AG04449 (cell line): ENCODE measurements at regions of chr19 and their contacts with region 1.

Region 1: GRCh38 chr19:47273313-47273977 is 1.2 kb upstream of the INAFM1 start:
- DNase-seq: peak; percentile 46
- H3K4me3 ChIP-seq: peak overlapping the region; percentile 66
- CTCF ChIP-seq: no peak

Region 2: DNA sequence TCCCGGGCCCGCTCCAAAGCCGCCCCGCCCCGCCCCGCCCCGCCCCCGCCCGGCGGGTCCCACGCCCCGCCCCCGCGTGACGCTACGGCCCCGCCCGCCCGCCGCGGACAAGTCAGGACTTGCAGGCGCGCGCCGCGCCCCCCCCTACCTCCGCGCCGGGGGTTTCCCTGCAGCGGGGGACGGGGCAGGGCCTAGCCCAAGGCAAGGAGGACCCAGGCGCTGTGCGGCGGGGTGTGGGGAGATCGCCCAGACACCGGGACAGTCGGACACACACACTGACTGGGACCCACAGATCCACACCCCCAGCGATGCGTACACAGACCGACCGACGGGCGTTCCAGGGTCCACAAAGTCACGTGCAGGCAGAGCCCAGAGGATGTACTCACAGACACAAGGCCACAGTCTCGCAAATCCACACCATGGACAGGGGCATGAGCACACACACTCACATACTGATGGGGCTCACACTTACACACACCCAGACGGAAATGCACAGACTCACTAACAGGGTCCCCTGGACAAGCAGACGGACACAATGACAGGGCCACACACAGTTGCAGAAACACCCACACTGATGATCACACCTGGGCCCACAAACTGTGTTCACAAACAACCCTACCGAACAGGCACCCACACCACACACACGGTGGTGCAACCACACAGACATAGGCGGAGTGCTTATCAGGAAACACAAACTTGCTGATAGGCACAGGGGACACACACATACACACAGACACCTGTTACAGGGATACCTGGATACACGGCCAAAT is 42.0 kb before region 1 on chr19:
- CTCF ChIA-PET with region 1: no interaction called
- POLR2A ChIA-PET with region 1: no interaction called
- DNase-seq: no peak
- H3K4me3 ChIP-seq: peak overlapping the region; percentile 95
- CTCF ChIP-seq: no peak

Region 3: DNA sequence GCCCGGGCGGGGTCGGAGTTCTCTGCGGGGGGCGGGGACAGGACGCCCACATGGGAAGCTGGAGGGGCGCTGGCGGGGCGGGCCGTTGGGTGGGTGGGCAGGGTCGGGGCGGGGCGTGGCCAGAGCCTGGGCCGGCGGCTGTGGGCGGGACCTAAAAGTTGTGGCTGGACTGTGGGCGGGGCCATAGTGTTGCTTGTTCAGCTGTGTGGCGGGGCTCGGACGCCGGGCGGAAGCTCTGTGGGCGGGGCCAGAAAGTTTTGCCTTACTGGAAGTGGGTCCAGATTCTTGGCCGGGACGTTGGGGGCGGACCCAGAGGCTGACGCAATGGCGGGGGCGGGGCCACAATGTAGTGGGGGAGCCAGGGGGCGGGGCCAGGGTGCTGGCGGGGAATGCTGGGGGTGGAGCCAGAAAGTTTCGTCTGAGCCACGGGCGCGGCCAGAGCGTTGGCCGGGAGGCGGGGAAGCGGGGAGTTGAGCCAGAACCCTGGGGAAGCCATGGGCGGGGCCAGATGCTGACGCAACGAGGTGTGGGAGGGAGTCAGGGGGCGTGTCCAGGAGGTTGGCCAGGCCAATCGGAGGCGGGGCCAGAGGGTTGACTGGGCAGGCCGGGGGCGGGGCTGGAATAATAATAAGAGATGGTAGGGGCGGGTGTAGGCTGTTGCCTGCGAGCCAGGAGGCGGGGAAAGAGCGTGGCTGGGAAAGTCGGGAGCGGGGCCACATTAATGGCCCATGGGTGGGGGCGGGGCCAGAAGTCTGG is 16.6 kb before region 1 on chr19:
- CTCF ChIA-PET with region 1: interaction called, 6 read pairs
- POLR2A ChIA-PET with region 1: interaction called, 27 read pairs
- DNase-seq: peak; percentile 92
- H3K4me3 ChIP-seq: peak overlapping the region; percentile 71
- CTCF ChIP-seq: no peak

Region 4: DNA sequence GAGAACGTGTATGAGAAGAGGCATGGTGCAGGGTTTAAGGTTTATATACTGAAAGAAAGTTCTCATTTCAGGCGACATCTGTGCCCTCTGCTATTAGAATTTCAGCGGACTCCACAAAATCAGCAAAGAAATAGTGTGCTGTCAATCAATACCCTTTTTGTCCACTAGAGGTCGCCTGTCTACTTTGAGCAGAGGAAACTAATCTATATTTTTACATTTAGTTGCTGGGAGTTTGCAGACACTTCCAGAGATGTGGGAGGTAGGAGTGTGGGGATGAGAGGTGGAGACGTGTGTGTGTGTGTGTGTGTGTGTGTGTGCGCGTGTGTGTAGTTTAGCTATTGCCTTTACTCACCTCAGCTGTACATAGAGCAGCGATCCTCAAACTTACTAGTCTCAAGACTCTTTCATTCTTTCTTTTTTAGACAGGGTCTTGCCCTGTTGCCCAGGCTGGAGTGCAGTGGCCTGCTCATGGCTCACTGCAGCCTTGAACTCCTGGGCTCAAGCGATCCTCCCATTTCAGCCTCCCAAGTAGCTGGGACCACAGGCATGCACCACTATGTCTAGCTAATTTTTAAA is 11.0 kb after region 1 on chr19:
- CTCF ChIA-PET with region 1: interaction called, 88 read pairs
- POLR2A ChIA-PET with region 1: interaction called, 4 read pairs
- DNase-seq: no peak
- H3K4me3 ChIP-seq: no peak overlapping the region
- CTCF ChIP-seq: peak; percentile 67

Region 5: GRCh38 chr19:47296036-47296435 is 22.6 kb after region 1 on chr19:
- CTCF ChIA-PET with region 1: interaction called, 88 read pairs
- POLR2A ChIA-PET with region 1: no interaction called
- DNase-seq: no peak
- H3K4me3 ChIP-seq: no peak overlapping the region
- CTCF ChIP-seq: peak; percentile 66

Region 6: GRCh38 chr19:47305309-47305751 is 31.9 kb after region 1 on chr19:
- CTCF ChIA-PET with region 1: interaction called, 16 read pairs
- POLR2A ChIA-PET with region 1: no interaction called
- DNase-seq: peak; percentile 41
- H3K4me3 ChIP-seq: peak overlapping the region; percentile 16; the same call in 1 of the 2 replicates
- CTCF ChIP-seq: peak; percentile 92